ENCODE measurements at regions of chr2 and their contacts with region 1.

Region 1: GRCh38 chr2:28446531-28446930 is 49.3 kb upstream of the PLB1 start:
- DNase-seq: no peak
- ATAC-seq: no peak
- H3K4me3 ChIP-seq: no peak overlapping the region
- H3K4me3 Mint-ChIP-seq: no peak overlapping the region
- H3K27ac ChIP-seq: no peak overlapping the region
- H3K27ac Mint-ChIP-seq: no peak overlapping the region
- H3K4me1 ChIP-seq: no peaks in the 10 kb centered on the region
- H3K4me1 Mint-ChIP-seq: peaks cover 0 to 24% (median 14%) of the 10 kb centered on the region in 3 donors
- H3K27me3 ChIP-seq: no peaks in the 10 kb centered on the region
- H3K27me3 Mint-ChIP-seq: no peaks in the 10 kb centered on the region

Region 2: GRCh38 chr2:28232295-28232694 is 214.2 kb before region 1 on chr2:
- CTCF ChIA-PET with region 1: interaction called in 1 of 2 experiments, 13 read pairs
- POLR2A ChIA-PET with region 1: no interaction called
- DNase-seq: no peak
- ATAC-seq: no peak
- H3K4me3 ChIP-seq: no peak overlapping the region
- H3K4me3 Mint-ChIP-seq: no peak overlapping the region
- H3K27ac ChIP-seq: no peak overlapping the region
- H3K27ac Mint-ChIP-seq: no peak overlapping the region
- H3K4me1 ChIP-seq: no peaks in the 10 kb centered on the region
- H3K4me1 Mint-ChIP-seq: peaks cover 0 to 3% (median 0%) of the 10 kb centered on the region in 3 donors
- H3K27me3 ChIP-seq: no peaks in the 10 kb centered on the region
- H3K27me3 Mint-ChIP-seq: no peaks in the 10 kb centered on the region

Region 3: GRCh38 chr2:28495551-28496250 is 49.2 kb after region 1 on chr2 and contains the start of gene PLB1:
- CTCF ChIA-PET with region 1: no interaction called
- POLR2A ChIA-PET with region 1: no interaction called
- DNase-seq: no peak
- ATAC-seq: no peak
- H3K4me3 ChIP-seq: no peak within 1 kb of the TSS
- H3K4me3 Mint-ChIP-seq: no peak within 1 kb of the TSS
- H3K27ac ChIP-seq: no peak within 1 kb of the TSS
- H3K27ac Mint-ChIP-seq: no peak within 1 kb of the TSS
- H3K4me1 ChIP-seq: no peaks in the 10 kb centered on the region
- H3K4me1 Mint-ChIP-seq: no peaks in the 10 kb centered on the region
- H3K27me3 ChIP-seq: peaks cover 0 to 2% of the 10 kb centered on the region in 2 experiments
- H3K27me3 Mint-ChIP-seq: peaks cover 2 to 3% of the 10 kb centered on the region in 2 donors
- total RNA-seq, gene PLB1: 0.07 to 2.5 (median 0.58) TPM

Measured in T-cell (primary cell).